ENCODE measurements at regions of chr1 and their contacts with region 1.

Region 1: GRCh38 chr1:32072622-32073298 is at the start of gene TMEM39B:
- DNase-seq: peak; percentile 84 to 88 (median 85)
- H3K4me3 ChIP-seq: peak within 1 kb of the TSS; percentile 59 to 97 (median 86)
- H3K4me3 Mint-ChIP-seq: peak within 1 kb of the TSS; percentile 92 to 97
- H3K27ac ChIP-seq: peak within 1 kb of the TSS; percentile 77 to 81
- H3K27ac Mint-ChIP-seq: peak within 1 kb of the TSS; percentile 90 to 97 (median 95)
- H3K4me1 ChIP-seq: peaks cover 41 to 58% of the 10 kb centered on the region in 2 donors
- H3K4me1 Mint-ChIP-seq: peaks cover 55% of the 10 kb centered on the region
- H3K27me3 ChIP-seq: no peaks in the 10 kb centered on the region
- H3K27me3 Mint-ChIP-seq: peaks cover 3 to 13% (median 5%) of the 10 kb centered on the region in 3 donors
- CTCF ChIP-seq: no peak
- polyA plus RNA-seq, gene TMEM39B: 3.3 to 30.6 (median 3.4) TPM

Region 2: GRCh38 chr1:32040711-32041110 is 32.0 kb before region 1 on chr1:
- intact Hi-C with region 1: no loop called
- DNase-seq: no peak
- H3K4me3 ChIP-seq: no peak overlapping the region
- H3K4me3 Mint-ChIP-seq: no peak overlapping the region
- H3K27ac ChIP-seq: no peak overlapping the region
- H3K27ac Mint-ChIP-seq: peak overlapping the region in 1 of 7 donors; percentile 60
- H3K4me1 ChIP-seq: peaks cover 10 to 15% of the 10 kb centered on the region in 2 donors
- H3K4me1 Mint-ChIP-seq: peaks cover 12% of the 10 kb centered on the region
- H3K27me3 ChIP-seq: no peaks in the 10 kb centered on the region
- H3K27me3 Mint-ChIP-seq: no peaks in the 10 kb centered on the region
- CTCF ChIP-seq: no peak

Region 3: DNA sequence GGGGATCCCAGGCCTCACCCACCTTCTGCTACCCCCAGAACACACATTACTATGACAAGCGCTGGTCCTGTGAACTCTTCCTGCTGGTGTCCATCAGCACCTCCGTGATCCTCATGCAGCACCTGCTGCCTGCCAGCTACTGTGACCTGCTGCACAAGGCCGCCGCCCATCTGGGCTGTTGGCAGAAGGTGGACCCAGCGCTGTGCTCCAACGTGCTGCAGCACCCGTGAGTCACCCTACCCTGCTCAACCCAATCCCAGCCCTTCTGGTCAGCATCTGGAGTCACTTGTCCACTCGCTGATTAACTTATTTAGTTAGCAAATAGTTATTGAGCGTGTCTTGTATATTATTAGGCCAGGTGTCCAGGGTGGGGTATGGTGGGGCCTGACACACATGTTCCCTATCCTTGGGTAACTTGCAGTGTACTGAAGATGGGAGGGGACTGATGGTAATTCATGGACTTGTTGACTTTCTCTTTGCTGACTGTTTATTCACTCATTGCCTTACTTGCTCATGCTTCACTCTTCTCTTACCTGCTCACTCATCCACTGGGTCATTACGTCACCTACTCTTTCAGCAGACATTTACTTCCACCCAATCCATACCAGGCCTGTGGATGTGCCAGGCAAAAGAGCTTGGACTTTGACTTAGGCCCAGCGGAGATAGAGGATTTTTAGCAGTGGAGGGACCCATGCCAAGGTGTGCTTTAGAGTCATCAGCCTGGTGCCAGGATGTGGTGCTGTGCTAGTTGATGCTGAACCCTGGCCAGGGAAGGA is 22.2 kb after region 1 on chr1:
- intact Hi-C with region 1: no loop called
- DNase-seq: no peak
- H3K4me3 ChIP-seq: no peak overlapping the region
- H3K4me3 Mint-ChIP-seq: no peak overlapping the region
- H3K27ac ChIP-seq: no peak overlapping the region
- H3K27ac Mint-ChIP-seq: peak overlapping the region in 3 of 7 donors; percentile 15 to 46 (median 36)
- H3K4me1 ChIP-seq: no peaks in the 10 kb centered on the region
- H3K4me1 Mint-ChIP-seq: no peaks in the 10 kb centered on the region
- H3K27me3 ChIP-seq: no peaks in the 10 kb centered on the region
- H3K27me3 Mint-ChIP-seq: no peaks in the 10 kb centered on the region
- CTCF ChIP-seq: no peak

Region 4: GRCh38 chr1:32107742-32108661 is 35.2 kb after region 1 on chr1 and contains the start of gene KPNA6:
- intact Hi-C with region 1: loop called (anchors 2 to 5 kb)
- DNase-seq: peak; percentile 88 to 92 (median 91)
- H3K4me3 ChIP-seq: peak within 1 kb of the TSS; percentile 64 to 93 (median 87)
- H3K4me3 Mint-ChIP-seq: peak within 1 kb of the TSS; percentile 98 to 99
- H3K27ac ChIP-seq: peak within 1 kb of the TSS; percentile 89 to 90
- H3K27ac Mint-ChIP-seq: peak within 1 kb of the TSS; percentile 92 to 98 (median 98)
- H3K4me1 ChIP-seq: peaks cover 23 to 34% of the 10 kb centered on the region in 2 donors
- H3K4me1 Mint-ChIP-seq: peaks cover 44% of the 10 kb centered on the region
- H3K27me3 ChIP-seq: no peaks in the 10 kb centered on the region
- H3K27me3 Mint-ChIP-seq: peaks cover 0 to 3% (median 0%) of the 10 kb centered on the region in 3 donors
- CTCF ChIP-seq: no peak
- polyA plus RNA-seq, gene KPNA6: 11.0 to 26.7 (median 20.2) TPM